Natural killer cell (primary cell): ENCODE measurements at regions of chr11 and their contacts with region 1.

Region 1: GRCh38 chr11:64204464-64204989 is 2.0 kb upstream of the FERMT3 start:
- DNase-seq: peak; percentile 69 to 96
- ATAC-seq: peak; percentile 39 to 60 (median 55)
- H3K4me3 ChIP-seq: no peak overlapping the region
- H3K4me3 Mint-ChIP-seq: peak overlapping the region; percentile 74
- H3K27ac ChIP-seq: no peak overlapping the region
- H3K27ac Mint-ChIP-seq: peak overlapping the region; percentile 77 to 88
- H3K4me1 ChIP-seq: peaks cover 50% of the 10 kb centered on the region
- H3K4me1 Mint-ChIP-seq: peaks cover 28 to 53% of the 10 kb centered on the region in 2 donors
- H3K27me3 ChIP-seq: no peaks in the 10 kb centered on the region
- H3K27me3 Mint-ChIP-seq: no peaks in the 10 kb centered on the region
- CTCF ChIP-seq: peak; percentile 68

Region 2: DNA sequence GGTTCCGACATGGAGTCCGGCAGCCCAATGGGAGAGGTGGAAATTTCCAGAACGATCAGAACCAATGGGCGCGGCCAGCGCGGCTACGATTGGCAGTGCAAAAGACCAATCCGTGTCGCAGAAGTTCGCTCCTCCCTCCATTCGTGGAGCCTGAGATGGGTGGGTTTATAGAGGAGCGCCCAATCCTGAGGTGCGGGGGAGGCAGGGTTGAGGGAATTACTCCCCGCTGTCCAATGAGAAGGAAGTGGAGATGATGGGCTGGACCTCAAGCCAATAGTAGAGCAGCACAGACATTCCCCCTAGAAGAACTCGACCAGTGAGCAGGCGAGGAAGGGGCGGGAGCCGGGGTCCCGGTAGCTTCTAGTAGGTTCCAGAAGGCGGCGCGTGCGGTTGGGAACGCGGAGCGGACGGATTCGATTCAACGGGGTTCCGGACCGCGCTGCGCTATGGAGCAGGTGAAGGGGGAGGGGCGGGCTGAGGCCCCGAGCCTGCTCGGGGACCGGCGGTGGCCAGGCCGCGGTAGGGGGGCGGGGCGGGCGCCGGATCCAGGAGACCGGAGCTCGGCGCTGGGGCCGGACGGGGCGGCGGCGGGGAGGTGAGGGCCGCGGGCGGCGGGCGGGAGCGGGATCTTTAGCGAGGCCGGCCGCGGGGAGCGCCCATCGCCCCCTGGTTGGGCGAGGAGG is 18.6 kb before region 1 on chr11 and contains the start of gene STIP1:
- intact Hi-C with region 1: loop called (anchors 2 kb)
- DNase-seq: peak; percentile 96 to 100
- ATAC-seq: peak; percentile 85 to 95 (median 86)
- H3K4me3 ChIP-seq: peak within 1 kb of the TSS; percentile 60
- H3K4me3 Mint-ChIP-seq: peak within 1 kb of the TSS; percentile 98
- H3K27ac ChIP-seq: peak within 1 kb of the TSS; percentile 66
- H3K27ac Mint-ChIP-seq: no peak within 1 kb of the TSS
- H3K4me1 ChIP-seq: peaks cover 20% of the 10 kb centered on the region
- H3K4me1 Mint-ChIP-seq: peaks cover 6 to 31% of the 10 kb centered on the region in 2 donors
- H3K27me3 ChIP-seq: no peaks in the 10 kb centered on the region
- H3K27me3 Mint-ChIP-seq: no peaks in the 10 kb centered on the region
- CTCF ChIP-seq: no peak
- total RNA-seq, gene STIP1: 80.9 to 110 (median 85.1) TPM

Region 3: GRCh38 chr11:64230171-64230984 is 25.9 kb after region 1 on chr11 and contains the start of gene DNAJC4:
- intact Hi-C with region 1: loop called (anchors 1 kb)
- DNase-seq: peak; percentile 86 to 92
- ATAC-seq: peak; percentile 64 to 78 (median 65)
- H3K4me3 ChIP-seq: peak within 1 kb of the TSS; percentile 93
- H3K4me3 Mint-ChIP-seq: peak within 1 kb of the TSS; percentile 94
- H3K27ac ChIP-seq: peak within 1 kb of the TSS; percentile 95
- H3K27ac Mint-ChIP-seq: peak within 1 kb of the TSS; percentile 93 to 97
- H3K4me1 ChIP-seq: peaks cover 66% of the 10 kb centered on the region
- H3K4me1 Mint-ChIP-seq: peaks cover 22 to 49% of the 10 kb centered on the region in 2 donors
- H3K27me3 ChIP-seq: no peaks in the 10 kb centered on the region
- H3K27me3 Mint-ChIP-seq: no peaks in the 10 kb centered on the region
- CTCF ChIP-seq: no peak
- total RNA-seq, gene DNAJC4: 45.0 to 47.0 (median 46.6) TPM

Region 4: GRCh38 chr11:64246871-64247728 is 42.6 kb after region 1 on chr11 and contains the start of gene PPP1R14B:
- intact Hi-C with region 1: no loop called
- DNase-seq: peak; percentile 69 to 82
- ATAC-seq: peak; percentile 55 to 76 (median 65)
- H3K4me3 ChIP-seq: peak within 1 kb of the TSS; percentile 81
- H3K4me3 Mint-ChIP-seq: peak within 1 kb of the TSS; percentile 85
- H3K27ac ChIP-seq: peak within 1 kb of the TSS; percentile 49
- H3K27ac Mint-ChIP-seq: peak within 1 kb of the TSS; percentile 69 to 81
- H3K4me1 ChIP-seq: peaks cover 62% of the 10 kb centered on the region
- H3K4me1 Mint-ChIP-seq: peaks cover 14 to 49% of the 10 kb centered on the region in 2 donors
- H3K27me3 ChIP-seq: no peaks in the 10 kb centered on the region
- H3K27me3 Mint-ChIP-seq: no peaks in the 10 kb centered on the region
- CTCF ChIP-seq: no peak
- total RNA-seq, gene PPP1R14B: 16.9 to 21.3 (median 21.0) TPM

Region 5: GRCh38 chr11:64284048-64284961 is 79.8 kb after region 1 on chr11 and contains the start of gene BAD:
- intact Hi-C with region 1: loop called (anchors 1 kb)
- DNase-seq: peak; percentile 84 to 94
- ATAC-seq: peak; percentile 76 to 90 (median 78)
- H3K4me3 ChIP-seq: peak within 1 kb of the TSS; percentile 87
- H3K4me3 Mint-ChIP-seq: peak within 1 kb of the TSS; percentile 93
- H3K27ac ChIP-seq: peak within 1 kb of the TSS; percentile 99
- H3K27ac Mint-ChIP-seq: peak within 1 kb of the TSS; percentile 94 to 96
- H3K4me1 ChIP-seq: peaks cover 22% of the 10 kb centered on the region
- H3K4me1 Mint-ChIP-seq: peaks cover 12 to 16% of the 10 kb centered on the region in 2 donors
- H3K27me3 ChIP-seq: no peaks in the 10 kb centered on the region
- H3K27me3 Mint-ChIP-seq: no peaks in the 10 kb centered on the region
- CTCF ChIP-seq: no peak
- total RNA-seq, gene BAD: 30.6 to 35.8 (median 31.6) TPM

Region 6: GRCh38 chr11:64341851-64342791 is 137.6 kb after region 1 on chr11:
- intact Hi-C with region 1: loop called (anchors 5 kb)
- DNase-seq: peak; percentile 91
- ATAC-seq: peak; percentile 66 to 79 (median 67)
- H3K4me3 ChIP-seq: no peak overlapping the region
- H3K4me3 Mint-ChIP-seq: peak overlapping the region; percentile 95
- H3K27ac ChIP-seq: no peak overlapping the region
- H3K27ac Mint-ChIP-seq: peak overlapping the region; percentile 96 to 98
- H3K4me1 ChIP-seq: peaks cover 48% of the 10 kb centered on the region
- H3K4me1 Mint-ChIP-seq: peaks cover 33 to 61% of the 10 kb centered on the region in 2 donors
- H3K27me3 ChIP-seq: no peaks in the 10 kb centered on the region
- H3K27me3 Mint-ChIP-seq: no peaks in the 10 kb centered on the region
- CTCF ChIP-seq: peak; percentile 11

Region 7: GRCh38 chr11:64652586-64653387 is 448.3 kb after region 1 on chr11:
- intact Hi-C with region 1: loop called (anchors 5 kb)
- DNase-seq: peak; percentile 66 to 80
- ATAC-seq: peak; percentile 70 to 90 (median 88)
- H3K4me3 ChIP-seq: no peak overlapping the region
- H3K4me3 Mint-ChIP-seq: no peak overlapping the region
- H3K27ac ChIP-seq: no peak overlapping the region
- H3K27ac Mint-ChIP-seq: no peak overlapping the region
- H3K4me1 ChIP-seq: peaks cover 36% of the 10 kb centered on the region
- H3K4me1 Mint-ChIP-seq: peaks cover 0 to 6% of the 10 kb centered on the region in 2 donors
- H3K27me3 ChIP-seq: no peaks in the 10 kb centered on the region
- H3K27me3 Mint-ChIP-seq: peaks cover 0 to 7% of the 10 kb centered on the region in 2 donors
- CTCF ChIP-seq: peak; percentile 59